ENCODE measurements at regions of chr17 and their contacts with region 1.

Region 1: DNA sequence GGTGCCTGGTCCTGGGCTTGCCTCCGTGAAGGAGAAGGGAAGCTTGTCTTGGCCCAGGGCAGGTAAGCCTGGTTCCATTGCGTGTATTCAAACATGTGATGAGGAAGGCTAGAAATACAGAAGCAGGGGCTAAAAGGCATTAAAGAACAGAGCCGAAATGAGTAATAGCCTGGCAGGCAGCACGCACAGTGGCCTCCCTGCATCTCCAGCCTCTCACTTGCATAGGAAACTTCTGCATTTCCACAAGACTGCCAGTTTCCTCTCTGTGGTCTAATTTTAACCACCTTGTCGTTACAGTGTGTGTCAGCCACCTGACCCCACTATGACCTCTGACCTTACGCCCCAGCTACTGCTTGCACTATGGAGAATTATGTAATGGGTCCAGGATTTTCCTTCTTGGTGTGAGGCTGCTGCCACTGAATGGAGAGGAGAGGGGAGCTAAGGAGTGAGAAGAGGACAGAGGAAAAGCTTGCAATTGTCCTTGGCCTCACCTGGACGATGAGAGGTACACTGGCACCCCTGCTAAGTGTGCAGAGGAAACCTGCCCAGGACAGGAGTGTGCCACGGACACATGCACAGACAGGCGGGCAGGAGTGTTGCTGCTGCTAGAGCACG is 32.8 kb downstream of the HIC1 start:
- DNase-seq: peak; percentile 69
- ATAC-seq: no peak

Region 2: GRCh38 chr17:1673041-1673785 is 414.5 kb before region 1 on chr17:
- intact Hi-C with region 1: no loop called
- DNase-seq: no peak
- ATAC-seq: no peak

Region 3: GRCh38 chr17:2172077-2172851 is 84.6 kb after region 1 on chr17:
- intact Hi-C with region 1: loop called (anchors 10 kb)
- DNase-seq: peak; percentile 79
- ATAC-seq: peak; percentile 78